Activated CD4-positive, alpha-beta T cell treated with anti-CD3 and anti-CD28 coated beads, Interleukin-2, amount 10 ng/mL, durations not matched to agents 24 days and 14 days (primary cell): ENCODE measurements at regions of chr3 and their contacts with region 1.

Region 1: GRCh38 chr3:197256836-197257444 is 41.5 kb downstream of the DLG1 start:
- DNase-seq: peak; percentile 78
- H3K4me3 Mint-ChIP-seq: no peak overlapping the region
- H3K27ac Mint-ChIP-seq: no peak overlapping the region
- H3K4me1 Mint-ChIP-seq: peaks cover 33% of the 10 kb centered on the region
- H3K27me3 Mint-ChIP-seq: no peaks in the 10 kb centered on the region

Region 2: GRCh38 chr3:197224034-197224444 is 32.9 kb before region 1 on chr3:
- intact Hi-C with region 1: loop called (anchors 2 kb)
- DNase-seq: peak; percentile 69
- H3K4me3 Mint-ChIP-seq: no peak overlapping the region
- H3K27ac Mint-ChIP-seq: no peak overlapping the region
- H3K4me1 Mint-ChIP-seq: peaks cover 11% of the 10 kb centered on the region
- H3K27me3 Mint-ChIP-seq: no peaks in the 10 kb centered on the region

Region 3: GRCh38 chr3:197394464-197395321 is 137.8 kb after region 1 on chr3:
- intact Hi-C with region 1: loop called (anchors 10 kb)
- DNase-seq: peak; percentile 83
- H3K4me3 Mint-ChIP-seq: no peak overlapping the region
- H3K27ac Mint-ChIP-seq: peak overlapping the region; percentile 76
- H3K4me1 Mint-ChIP-seq: peaks cover 27% of the 10 kb centered on the region
- H3K27me3 Mint-ChIP-seq: no peaks in the 10 kb centered on the region

Region 4: DNA sequence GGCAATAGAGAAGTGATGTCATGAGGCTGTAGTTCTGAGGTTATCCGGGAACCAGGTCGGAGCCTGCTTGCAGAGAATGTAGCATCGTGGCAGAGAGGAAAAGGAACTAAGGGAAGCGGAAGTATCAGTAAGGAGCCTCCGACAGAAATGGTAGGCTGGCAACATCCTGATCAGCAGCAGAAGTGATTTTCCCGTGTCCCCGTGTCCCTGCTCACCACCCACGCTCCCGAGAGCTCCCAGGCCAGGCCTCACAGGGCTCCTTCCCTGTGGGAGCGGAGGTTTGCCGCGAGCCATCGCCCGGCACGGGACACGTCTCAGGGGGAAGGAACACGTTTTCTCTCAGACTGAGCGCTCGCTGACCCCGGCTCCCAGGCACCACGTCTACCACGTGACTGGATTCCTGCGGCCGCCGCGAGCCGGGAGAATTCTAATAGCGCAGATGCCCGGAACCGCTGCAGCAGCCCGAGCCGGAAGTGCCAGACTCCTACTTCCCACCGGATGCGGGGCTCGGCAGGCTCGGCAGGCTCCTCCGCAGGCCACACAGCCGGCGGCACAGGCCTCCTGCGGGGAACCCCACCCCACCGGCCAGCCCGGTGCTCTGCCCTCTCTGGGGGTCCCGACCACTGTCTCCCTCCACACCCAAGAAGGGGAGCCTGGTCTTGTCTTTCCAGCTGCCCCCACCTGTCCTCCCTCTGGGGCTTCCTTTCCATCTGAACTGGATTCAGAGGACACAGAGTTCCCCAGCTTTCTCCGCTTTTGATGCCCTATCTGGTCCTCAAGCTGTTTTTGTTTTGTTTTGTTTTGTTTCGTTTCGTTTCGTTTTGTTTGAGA is 199.5 kb after region 1 on chr3:
- intact Hi-C with region 1: loop called (anchors 2 kb)
- DNase-seq: peak; percentile 83
- H3K4me3 Mint-ChIP-seq: peak overlapping the region; percentile 85
- H3K27ac Mint-ChIP-seq: peak overlapping the region; percentile 88
- H3K4me1 Mint-ChIP-seq: peaks cover 18% of the 10 kb centered on the region
- H3K27me3 Mint-ChIP-seq: peaks cover 21% of the 10 kb centered on the region

Region 5: DNA sequence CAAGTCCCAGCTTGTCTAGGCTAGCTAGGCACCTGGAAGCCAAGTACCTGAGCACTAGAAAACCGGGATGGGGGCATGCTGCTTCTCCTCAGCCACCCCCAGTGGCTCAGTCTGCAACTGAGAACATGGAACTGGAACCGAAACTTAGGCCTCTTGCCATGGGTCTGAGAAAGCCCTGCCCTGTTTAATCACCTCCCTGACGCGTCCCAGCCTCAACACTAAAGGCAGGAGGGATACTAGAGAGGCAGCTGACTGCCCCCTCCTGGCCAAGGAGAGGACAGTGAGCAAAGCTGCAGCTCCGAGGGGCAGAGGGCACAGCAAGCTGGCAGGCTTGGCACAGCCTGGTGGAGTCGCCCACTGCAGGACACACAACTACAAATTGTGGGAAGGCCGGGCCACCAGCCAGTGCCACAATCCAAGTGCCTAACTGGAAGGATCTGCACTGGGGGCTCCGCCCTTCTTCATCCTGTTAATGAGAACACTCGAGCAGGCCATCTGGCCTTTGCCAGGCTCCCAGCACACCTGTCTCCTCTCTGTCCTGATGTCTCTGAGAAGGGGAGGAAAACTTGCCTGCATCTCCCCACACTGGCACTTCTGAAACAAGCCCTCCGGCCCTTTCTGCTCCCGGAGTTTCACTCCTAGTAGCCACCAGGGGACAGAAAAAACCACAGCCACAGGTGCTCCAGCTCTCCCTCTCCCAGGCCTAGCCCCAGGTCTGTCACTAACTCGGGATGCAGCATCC is 245.1 kb after region 1 on chr3:
- intact Hi-C with region 1: loop called (anchors 2 kb)
- DNase-seq: peak; percentile 81
- H3K4me3 Mint-ChIP-seq: no peak overlapping the region
- H3K27ac Mint-ChIP-seq: no peak overlapping the region
- H3K4me1 Mint-ChIP-seq: no peaks in the 10 kb centered on the region
- H3K27me3 Mint-ChIP-seq: no peaks in the 10 kb centered on the region